ENCODE measurements at regions of chr15 and their contacts with region 1.

Region 1: DNA sequence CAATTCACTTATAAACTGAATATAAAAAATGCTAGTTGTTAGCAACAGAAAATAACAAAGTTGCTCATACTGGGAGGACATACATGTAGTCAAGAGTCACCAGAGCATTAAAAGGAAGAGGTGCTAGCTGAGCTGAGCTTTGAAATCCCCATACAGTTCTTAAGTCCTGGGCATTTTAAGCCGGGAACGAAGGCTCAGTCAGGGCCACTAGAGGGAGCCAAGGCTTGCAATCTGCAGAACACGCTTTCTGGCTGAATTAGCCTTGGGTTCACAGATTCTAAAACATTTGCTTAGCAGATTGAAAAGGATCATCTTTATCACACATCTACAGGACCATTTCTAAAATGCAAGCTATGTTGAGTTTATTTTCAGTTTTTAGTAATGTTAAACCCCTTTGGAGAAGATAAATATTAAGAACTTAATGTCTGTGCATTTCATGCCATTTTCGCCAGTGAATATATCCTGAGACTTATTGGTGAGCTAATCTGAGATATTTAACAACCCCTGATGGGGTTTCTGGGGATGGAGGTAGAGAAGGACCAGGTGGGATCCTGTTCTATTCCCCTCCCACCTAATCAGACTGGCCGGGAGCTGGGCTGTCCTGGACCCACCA is 26.3 kb upstream of the MNS1 start:
- DNase-seq: peak; percentile 88
- H3K4me3 ChIP-seq: no peak overlapping the region
- H3K27ac ChIP-seq: no peak overlapping the region
- H3K4me1 ChIP-seq: no peaks in the 10 kb centered on the region
- H3K27me3 ChIP-seq: no peaks in the 10 kb centered on the region
- CTCF ChIP-seq: peak; percentile 95

Region 2: GRCh38 chr15:56732921-56733797 is 241.9 kb after region 1 on chr15 and contains the start of gene ZNF280D:
- CTCF ChIA-PET with region 1: no interaction called
- POLR2A ChIA-PET with region 1: no interaction called
- intact Hi-C with region 1: loop called (anchors 10 kb)
- DNase-seq: peak; percentile 94
- H3K4me3 ChIP-seq: peak within 1 kb of the TSS; percentile 59
- H3K27ac ChIP-seq: peak within 1 kb of the TSS; percentile 94
- H3K4me1 ChIP-seq: peaks cover 37% of the 10 kb centered on the region
- H3K27me3 ChIP-seq: no peaks in the 10 kb centered on the region
- CTCF ChIP-seq: no peak
- total RNA-seq, gene ZNF280D: 42.9 and 44.1 TPM in 2 replicates

Region 3: GRCh38 chr15:56869573-56869972 is 378.4 kb after region 1 on chr15:
- CTCF ChIA-PET with region 1: interaction called, 20 read pairs
- POLR2A ChIA-PET with region 1: no interaction called
- intact Hi-C with region 1: loop called (anchors 1 kb)
- DNase-seq: peak; percentile 73
- H3K4me3 ChIP-seq: no peak overlapping the region
- H3K27ac ChIP-seq: no peak overlapping the region
- H3K4me1 ChIP-seq: peaks cover 39% of the 10 kb centered on the region
- H3K27me3 ChIP-seq: no peaks in the 10 kb centered on the region
- CTCF ChIP-seq: peak; percentile 85

Region 4: GRCh38 chr15:56892659-56893356 is 401.6 kb after region 1 on chr15:
- CTCF ChIA-PET with region 1: no interaction called
- POLR2A ChIA-PET with region 1: no interaction called
- intact Hi-C with region 1: loop called (anchors 10 kb)
- DNase-seq: peak; percentile 84
- H3K4me3 ChIP-seq: no peak overlapping the region
- H3K27ac ChIP-seq: peak overlapping the region; percentile 60
- H3K4me1 ChIP-seq: peaks cover 29% of the 10 kb centered on the region
- H3K27me3 ChIP-seq: no peaks in the 10 kb centered on the region
- CTCF ChIP-seq: no peak

Region 5: GRCh38 chr15:57017024-57017423 is 525.8 kb after region 1 on chr15:
- CTCF ChIA-PET with region 1: no interaction called
- POLR2A ChIA-PET with region 1: no interaction called
- intact Hi-C with region 1: loop called (anchors 10 kb)
- DNase-seq: peak; percentile 58
- H3K4me3 ChIP-seq: no peak overlapping the region
- H3K27ac ChIP-seq: no peak overlapping the region
- H3K4me1 ChIP-seq: peaks cover 37% of the 10 kb centered on the region
- H3K27me3 ChIP-seq: no peaks in the 10 kb centered on the region
- CTCF ChIP-seq: peak; percentile 44

Region 6: GRCh38 chr15:57306161-57306943 is 815.1 kb after region 1 on chr15:
- CTCF ChIA-PET with region 1: interaction called, 3 read pairs
- POLR2A ChIA-PET with region 1: no interaction called
- intact Hi-C with region 1: loop called (anchors 5 kb)
- DNase-seq: peak; percentile 67
- H3K4me3 ChIP-seq: peak overlapping the region; percentile 37
- H3K27ac ChIP-seq: peak overlapping the region; percentile 62
- H3K4me1 ChIP-seq: peaks cover 11% of the 10 kb centered on the region
- H3K27me3 ChIP-seq: no peaks in the 10 kb centered on the region
- CTCF ChIP-seq: peak; percentile 94

Region 7: DNA sequence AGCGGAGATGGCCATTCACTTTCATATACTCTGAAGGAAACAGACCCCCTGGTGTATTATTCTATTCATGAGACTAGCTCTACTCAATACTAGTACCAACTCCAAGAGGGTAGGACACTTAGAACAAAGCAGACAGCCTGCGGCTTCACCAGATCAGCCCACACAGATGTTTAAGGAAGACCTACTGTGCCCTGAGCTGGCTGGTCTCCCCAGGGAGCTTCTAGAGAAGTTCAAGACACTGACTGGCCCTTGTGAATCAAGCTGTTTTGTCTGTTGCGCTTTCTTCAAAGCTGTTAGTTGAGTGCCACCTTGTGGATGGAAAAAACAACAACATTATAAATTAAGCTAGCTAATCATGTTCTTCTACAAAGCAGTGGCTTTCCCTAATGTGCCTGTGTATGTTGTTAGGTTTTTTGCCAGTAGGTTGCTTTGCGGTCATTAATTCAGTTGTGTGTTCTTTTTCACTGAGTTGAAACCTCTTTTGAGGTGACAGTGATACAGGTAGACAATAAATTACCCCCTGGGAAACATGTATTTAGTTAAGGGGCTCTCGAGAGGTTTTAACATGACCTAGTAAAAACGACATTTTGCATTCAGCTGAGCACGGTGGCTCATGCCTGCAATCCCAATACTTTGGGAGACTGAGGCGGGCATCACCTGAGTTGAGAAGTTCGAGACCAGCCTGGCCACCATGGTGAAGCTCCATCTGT is 1036.3 kb after region 1 on chr15:
- CTCF ChIA-PET with region 1: interaction called, 12 read pairs
- POLR2A ChIA-PET with region 1: no interaction called
- intact Hi-C with region 1: loop called (anchors 5 kb)
- DNase-seq: peak; percentile 98
- H3K4me3 ChIP-seq: no peak overlapping the region
- H3K27ac ChIP-seq: no peak overlapping the region
- H3K4me1 ChIP-seq: peaks cover 19% of the 10 kb centered on the region
- H3K27me3 ChIP-seq: no peaks in the 10 kb centered on the region
- CTCF ChIP-seq: peak; percentile 75